ENCODE measurements at regions of chr3 and their contacts with region 1.

Region 1: GRCh38 chr3:71583566-71584449 is at the start of gene FOXP1:
- DNase-seq: peak; percentile 77
- H3K4me3 ChIP-seq: peak within 1 kb of the TSS; percentile 88
- H3K27ac ChIP-seq: peak within 1 kb of the TSS; percentile 99
- H3K4me1 ChIP-seq: peaks cover 62% of the 10 kb centered on the region
- H3K27me3 ChIP-seq: no peaks in the 10 kb centered on the region
- CTCF ChIP-seq: no peak
- total RNA-seq, gene FOXP1: 41.2 TPM

Region 2: GRCh38 chr3:70982700-70983140 is 601.1 kb before region 1 on chr3:
- intact Hi-C with region 1: loop called (anchors 10 kb)
- DNase-seq: no peak
- H3K4me3 ChIP-seq: peak overlapping the region; percentile 32
- H3K27ac ChIP-seq: peak overlapping the region; percentile 86
- H3K4me1 ChIP-seq: peaks cover 74% of the 10 kb centered on the region
- H3K27me3 ChIP-seq: no peaks in the 10 kb centered on the region
- CTCF ChIP-seq: no peak

Region 3: DNA sequence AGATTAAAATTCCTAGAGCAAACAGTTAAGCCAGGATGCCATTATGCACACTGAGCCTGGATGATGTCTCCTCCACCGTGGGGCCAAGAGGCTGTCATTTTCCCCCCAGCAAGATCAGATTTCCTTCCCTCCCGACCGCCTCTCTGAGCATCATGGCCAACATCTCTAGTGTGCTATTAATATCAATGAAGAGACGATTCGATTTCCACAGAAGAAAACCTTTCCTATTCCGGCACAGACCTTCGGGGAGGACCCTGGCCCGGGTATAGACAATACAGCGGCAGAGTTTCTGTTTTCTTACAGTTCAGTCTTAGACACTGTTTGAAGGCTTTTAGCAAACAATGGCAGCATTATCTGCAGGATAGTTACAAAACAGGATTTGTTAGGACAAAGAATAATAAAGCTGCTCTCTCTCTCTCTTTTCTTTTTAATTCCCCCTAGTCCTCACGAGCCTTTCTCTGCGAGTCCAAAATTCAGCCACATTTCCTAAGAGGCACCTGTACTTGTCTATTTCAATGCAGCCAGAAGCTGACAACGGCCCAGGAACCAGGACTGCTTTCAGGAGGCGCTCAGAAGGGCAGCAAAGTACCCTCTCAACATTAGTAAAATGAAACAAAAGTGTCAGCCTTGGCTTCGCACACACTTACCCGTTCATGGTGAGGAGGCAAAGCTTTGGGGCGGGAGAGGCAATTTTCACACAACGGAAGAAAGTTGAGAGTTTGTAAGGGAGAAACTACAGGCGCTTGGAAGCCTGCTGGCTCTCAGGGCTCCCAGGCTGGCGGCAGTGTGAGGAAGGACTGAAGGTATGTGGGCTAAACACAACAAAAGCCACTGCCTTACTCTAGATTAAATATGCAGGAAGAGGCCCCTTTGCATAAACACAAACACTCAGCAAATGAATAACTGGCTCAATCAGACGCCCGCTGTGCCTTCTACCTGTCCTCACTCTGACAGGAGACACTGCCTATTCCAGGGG is 278.3 kb before region 1 on chr3:
- intact Hi-C with region 1: loop called (anchors 10 kb)
- DNase-seq: peak; percentile 18
- H3K4me3 ChIP-seq: peak overlapping the region; percentile 59
- H3K27ac ChIP-seq: peak overlapping the region; percentile 80
- H3K4me1 ChIP-seq: peaks cover 40% of the 10 kb centered on the region
- H3K27me3 ChIP-seq: no peaks in the 10 kb centered on the region
- CTCF ChIP-seq: no peak

Region 4: DNA sequence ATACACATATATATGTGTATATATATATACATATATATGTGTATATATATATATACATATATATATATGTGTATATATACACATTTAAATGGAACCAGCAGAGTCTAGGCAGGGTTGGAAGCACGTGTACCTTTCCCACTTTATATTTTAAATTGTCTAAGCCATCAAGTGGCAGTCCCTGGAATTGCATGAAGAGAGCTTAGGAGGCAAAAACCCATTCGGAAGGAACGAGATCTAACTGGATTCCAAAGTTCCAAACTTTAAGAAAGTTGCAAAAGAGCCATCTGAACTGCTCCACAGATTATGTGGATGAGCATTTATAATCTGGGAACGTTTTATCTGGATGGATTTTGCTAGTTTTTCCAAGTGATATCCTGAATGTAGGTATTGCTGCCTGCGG is 186.8 kb before region 1 on chr3:
- intact Hi-C with region 1: loop called (anchors 10 kb)
- DNase-seq: no peak
- H3K4me3 ChIP-seq: no peak overlapping the region
- H3K27ac ChIP-seq: no peak overlapping the region
- H3K4me1 ChIP-seq: peaks cover 33% of the 10 kb centered on the region
- H3K27me3 ChIP-seq: no peaks in the 10 kb centered on the region
- CTCF ChIP-seq: peak; percentile 63

Region 5: GRCh38 chr3:71694358-71694999 is 110.7 kb after region 1 on chr3:
- intact Hi-C with region 1: no loop called
- DNase-seq: no peak
- H3K4me3 ChIP-seq: no peak overlapping the region
- H3K27ac ChIP-seq: no peak overlapping the region
- H3K4me1 ChIP-seq: peaks cover 29% of the 10 kb centered on the region
- H3K27me3 ChIP-seq: no peaks in the 10 kb centered on the region
- CTCF ChIP-seq: no peak

Measured in left ventricle myocardium inferior (tissue), 1 donor.